ENCODE measurements at regions of chr2 and their contacts with region 1.

Region 1: GRCh38 chr2:73828818-73829570 is at the start of gene STAMBP:
- DNase-seq: peak; percentile 98
- H3K4me3 Mint-ChIP-seq: peak within 1 kb of the TSS; percentile 82
- H3K27ac Mint-ChIP-seq: peak within 1 kb of the TSS; percentile 98
- H3K4me1 Mint-ChIP-seq: peaks cover 33% of the 10 kb centered on the region
- H3K27me3 Mint-ChIP-seq: no peaks in the 10 kb centered on the region
- CTCF ChIP-seq: no peak
- total RNA-seq, gene STAMBP: 64.9 and 66.3 TPM in 2 replicates

Region 2: DNA sequence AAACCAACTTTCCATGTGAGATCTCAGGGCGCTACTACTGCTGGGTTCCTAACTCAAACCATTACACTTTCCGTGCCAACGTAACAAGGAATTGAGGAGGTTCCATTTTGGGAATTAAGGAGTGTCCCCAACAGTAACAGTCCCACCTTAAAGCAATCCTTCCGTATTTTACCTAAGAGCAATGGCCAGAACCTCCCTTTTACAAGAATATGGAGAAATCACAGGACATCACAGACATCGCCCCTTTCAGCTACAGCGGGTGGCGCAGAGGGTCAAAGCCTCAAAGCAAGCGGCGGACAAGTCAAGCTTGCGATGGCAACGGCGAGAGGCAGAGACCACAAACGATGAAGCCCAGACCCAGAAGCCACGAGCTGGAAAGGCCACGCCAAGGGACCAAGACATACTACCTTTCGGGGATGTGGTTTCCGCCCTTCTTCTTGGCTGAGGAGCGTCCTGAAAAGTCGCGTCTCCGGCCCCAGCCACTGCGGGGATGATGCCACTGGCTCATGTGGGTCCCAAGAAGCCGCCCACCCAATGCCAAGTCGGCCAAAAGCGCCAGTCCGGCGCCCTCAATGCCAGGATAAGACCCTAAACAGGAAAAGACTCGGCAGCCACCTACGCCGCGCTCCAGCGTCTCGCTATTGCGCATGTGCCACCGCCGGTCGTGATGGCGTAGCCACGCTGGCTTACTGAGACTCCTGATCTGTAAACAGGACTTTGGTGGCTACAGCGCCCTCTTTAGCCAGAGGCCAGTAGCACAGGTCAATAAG is 49.3 kb before region 1 on chr2 and contains the start of gene DUSP11:
- CTCF ChIA-PET with region 1: interaction called, 7 read pairs
- POLR2A ChIA-PET with region 1: interaction called, 12 read pairs
- intact Hi-C with region 1: no loop called
- DNase-seq: peak; percentile 95
- H3K4me3 Mint-ChIP-seq: peak within 1 kb of the TSS; percentile 94
- H3K27ac Mint-ChIP-seq: peak within 1 kb of the TSS; percentile 96
- H3K4me1 Mint-ChIP-seq: peaks cover 25% of the 10 kb centered on the region
- H3K27me3 Mint-ChIP-seq: no peaks in the 10 kb centered on the region
- CTCF ChIP-seq: peak; percentile 85
- total RNA-seq, gene DUSP11: 45.0 and 46.3 TPM in 2 replicates

Region 3: GRCh38 chr2:73933194-73933593 is 104.2 kb after region 1 on chr2:
- CTCF ChIA-PET with region 1: interaction called, 10 read pairs
- POLR2A ChIA-PET with region 1: interaction called, 21 read pairs
- intact Hi-C with region 1: loop called (anchors 2 kb)
- DNase-seq: no peak
- H3K4me3 Mint-ChIP-seq: no peak overlapping the region
- H3K27ac Mint-ChIP-seq: peak overlapping the region; percentile 3
- H3K4me1 Mint-ChIP-seq: peaks cover 73% of the 10 kb centered on the region
- H3K27me3 Mint-ChIP-seq: no peaks in the 10 kb centered on the region
- CTCF ChIP-seq: no peak

Region 4: DNA sequence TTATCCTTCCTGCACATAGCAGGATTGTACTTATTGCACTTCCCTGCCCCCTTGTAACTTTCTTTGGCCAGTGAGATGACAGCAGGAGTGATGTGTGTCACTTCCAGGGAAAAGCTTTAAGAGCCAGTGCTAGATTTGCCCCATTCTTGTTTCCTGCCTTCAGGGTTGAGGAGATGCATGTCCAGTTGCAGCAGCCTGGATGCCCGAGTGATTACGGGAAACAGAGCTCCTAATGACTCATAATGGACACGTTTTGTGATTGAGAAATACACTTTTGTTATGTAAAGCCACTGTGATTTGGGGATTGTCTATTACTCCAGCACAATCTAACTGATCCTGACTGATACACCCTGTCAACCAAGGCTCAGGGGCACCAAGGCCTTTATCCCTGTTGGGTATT is 150.7 kb after region 1 on chr2:
- CTCF ChIA-PET with region 1: interaction called, 4 read pairs
- POLR2A ChIA-PET with region 1: interaction called, 10 read pairs
- intact Hi-C with region 1: loop called (anchors 2 kb)
- DNase-seq: peak; percentile 93
- H3K4me3 Mint-ChIP-seq: peak overlapping the region; percentile 78
- H3K27ac Mint-ChIP-seq: peak overlapping the region; percentile 46
- H3K4me1 Mint-ChIP-seq: peaks cover 43% of the 10 kb centered on the region
- H3K27me3 Mint-ChIP-seq: no peaks in the 10 kb centered on the region
- CTCF ChIP-seq: no peak

Region 5: DNA sequence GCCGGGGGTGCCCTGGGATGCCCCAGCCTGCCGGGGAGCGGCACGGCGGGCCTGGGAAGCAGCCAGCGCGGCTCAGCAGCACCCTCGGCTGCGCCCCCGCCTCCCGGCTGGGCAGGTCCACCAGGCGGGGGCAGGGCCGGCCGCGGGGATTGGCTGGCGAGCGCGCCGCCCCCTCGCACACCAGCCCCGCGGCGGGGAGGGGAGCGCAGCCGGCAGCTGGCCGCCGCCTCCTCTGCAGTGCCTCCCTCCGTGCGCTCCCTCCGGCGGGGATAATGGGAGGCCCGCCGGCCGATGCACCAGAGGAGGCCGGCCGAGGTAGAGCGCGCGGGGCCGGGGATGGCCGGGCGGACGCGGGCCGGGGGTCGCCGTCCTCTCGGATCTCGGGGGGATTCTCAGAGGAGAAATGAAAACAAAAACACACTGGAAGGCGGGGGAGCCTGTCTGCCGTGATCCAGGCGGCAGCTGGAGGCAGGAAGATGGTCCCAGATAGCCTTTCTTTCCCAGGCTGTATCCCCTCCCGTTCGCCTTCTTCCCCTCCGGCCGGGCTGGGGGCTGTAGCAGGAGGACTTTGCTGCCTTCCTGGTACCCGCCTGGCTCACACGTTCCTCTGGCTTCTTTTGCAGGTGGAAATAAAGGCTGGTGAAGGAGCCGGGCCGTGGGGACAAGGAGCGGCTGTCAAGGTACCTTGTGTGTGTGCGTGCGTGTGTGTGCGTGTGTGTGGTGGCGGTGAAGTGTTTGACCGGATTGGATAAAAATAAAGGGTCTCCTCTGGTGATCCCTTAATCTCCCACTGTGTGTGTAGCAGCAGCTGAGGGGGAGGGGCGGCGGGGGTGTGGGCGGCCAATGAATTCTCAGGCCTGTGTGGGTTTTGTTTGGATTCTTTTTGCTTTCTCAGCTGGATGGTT is 173.7 kb after region 1 on chr2:
- CTCF ChIA-PET with region 1: no interaction called
- POLR2A ChIA-PET with region 1: no interaction called
- intact Hi-C with region 1: loop called (anchors 5 kb)
- DNase-seq: peak; percentile 82
- H3K4me3 Mint-ChIP-seq: peak overlapping the region; percentile 72
- H3K27ac Mint-ChIP-seq: no peak overlapping the region
- H3K4me1 Mint-ChIP-seq: peaks cover 67% of the 10 kb centered on the region
- H3K27me3 Mint-ChIP-seq: no peaks in the 10 kb centered on the region
- CTCF ChIP-seq: no peak

Region 6: DNA sequence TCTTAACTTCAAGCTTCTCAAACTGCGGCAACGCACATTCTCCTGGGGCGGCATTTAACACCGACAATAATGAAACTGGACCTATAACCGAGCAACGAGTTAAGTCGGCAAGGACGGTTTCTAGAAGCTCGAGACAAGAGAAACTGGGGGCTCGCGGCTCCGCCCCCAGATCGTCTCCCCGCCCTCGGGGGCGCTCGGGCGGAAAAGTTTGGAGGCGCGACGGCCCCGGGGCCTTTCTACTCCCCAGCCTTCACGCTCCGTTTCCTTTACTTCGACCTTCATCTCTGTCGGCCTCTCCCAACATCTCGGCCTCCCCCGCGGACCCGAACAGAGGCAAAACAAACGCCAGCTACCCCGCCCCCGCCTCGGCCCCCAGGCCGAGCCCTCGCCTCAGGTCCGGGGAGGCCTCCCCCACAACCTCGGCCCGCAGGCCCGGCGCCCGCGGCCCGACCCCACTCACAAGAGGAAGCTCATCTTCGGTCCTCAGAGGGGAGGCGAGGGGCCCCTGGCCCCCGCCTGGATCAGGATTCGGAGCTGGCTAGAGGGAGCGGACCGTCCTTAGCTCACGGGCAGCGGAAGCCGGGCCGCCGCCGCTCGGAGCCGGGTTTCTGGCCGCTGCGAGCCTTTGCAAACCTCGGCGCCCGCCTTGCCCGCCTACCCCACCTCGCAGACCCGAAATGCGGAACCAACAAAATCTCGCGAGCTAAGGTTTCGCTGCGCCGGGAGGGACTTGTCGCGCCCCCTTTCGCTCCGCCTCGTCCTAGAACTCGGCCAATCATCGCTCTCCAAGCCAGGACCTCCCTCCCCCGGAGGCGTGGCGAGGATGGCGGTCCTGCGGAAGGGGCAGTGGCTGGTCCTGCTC is 349.4 kb after region 1 on chr2 and contains the start of gene MOB1A:
- CTCF ChIA-PET with region 1: interaction called, 6 read pairs
- POLR2A ChIA-PET with region 1: interaction called, 10 read pairs
- intact Hi-C with region 1: no loop called
- DNase-seq: peak; percentile 99
- H3K4me3 Mint-ChIP-seq: peak within 1 kb of the TSS; percentile 78
- H3K27ac Mint-ChIP-seq: peak within 1 kb of the TSS; percentile 61
- H3K4me1 Mint-ChIP-seq: peaks cover 19% of the 10 kb centered on the region
- H3K27me3 Mint-ChIP-seq: no peaks in the 10 kb centered on the region
- CTCF ChIP-seq: no peak
- total RNA-seq, gene MOB1A: 92.6 and 97.5 TPM in 2 replicates

Region 7: DNA sequence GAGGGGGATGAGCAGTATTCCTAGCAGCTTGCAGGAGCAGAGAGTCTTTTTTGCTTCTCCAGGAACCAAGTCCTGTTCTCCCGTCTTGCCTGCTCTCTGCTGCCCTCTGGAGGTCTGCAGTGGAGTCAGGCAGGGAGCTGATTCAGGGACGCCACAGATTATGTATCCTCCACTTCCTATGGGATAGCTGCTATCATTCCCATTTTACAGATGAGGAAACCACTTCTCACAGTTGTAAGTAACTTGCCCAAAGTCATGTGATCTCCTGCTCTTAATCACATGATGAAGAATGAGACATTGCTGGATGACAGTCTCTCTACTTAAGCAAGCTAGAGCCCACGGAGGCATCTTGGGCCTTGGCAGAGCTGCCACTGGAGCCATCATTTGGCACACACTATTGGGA is 505.9 kb after region 1 on chr2:
- CTCF ChIA-PET with region 1: interaction called, 29 read pairs
- POLR2A ChIA-PET with region 1: interaction called, 3 read pairs
- intact Hi-C with region 1: loop called (anchors 1 kb)
- DNase-seq: peak; percentile 75
- H3K4me3 Mint-ChIP-seq: no peak overlapping the region
- H3K27ac Mint-ChIP-seq: no peak overlapping the region
- H3K4me1 Mint-ChIP-seq: no peaks in the 10 kb centered on the region
- H3K27me3 Mint-ChIP-seq: peaks cover 7% of the 10 kb centered on the region
- CTCF ChIP-seq: peak; percentile 88